ENCODE measurements at regions of chr11 and their contacts with region 1.

Region 1: GRCh38 chr11:106276859-106277436 is 199.5 kb downstream of the AASDHPPT start:
- DNase-seq: no peak
- H3K4me3 ChIP-seq: no peak overlapping the region
- H3K27ac ChIP-seq: 0 out of 2 replicates have a peak overlapping the region, but pooled peaks have one; percentile 10
- H3K4me1 ChIP-seq: peaks cover 0 to 5% (median 0%) of the 10 kb centered on the region in 4 experiments; a peak in 1 of 7 replicates
- H3K27me3 ChIP-seq: peaks cover 0 to 1% (median 0%) of the 10 kb centered on the region in 4 experiments; a peak in 1 of 7 replicates
- CTCF ChIP-seq: peak in 2 of 3 experiments; percentile 59 to 60; a peak in 3 of 4 replicates
- EP300 ChIP-seq: no peak
- POLR2A ChIP-seq: no peak
- RAD21 ChIP-seq: peak; percentile 70 to 78

Region 2: DNA sequence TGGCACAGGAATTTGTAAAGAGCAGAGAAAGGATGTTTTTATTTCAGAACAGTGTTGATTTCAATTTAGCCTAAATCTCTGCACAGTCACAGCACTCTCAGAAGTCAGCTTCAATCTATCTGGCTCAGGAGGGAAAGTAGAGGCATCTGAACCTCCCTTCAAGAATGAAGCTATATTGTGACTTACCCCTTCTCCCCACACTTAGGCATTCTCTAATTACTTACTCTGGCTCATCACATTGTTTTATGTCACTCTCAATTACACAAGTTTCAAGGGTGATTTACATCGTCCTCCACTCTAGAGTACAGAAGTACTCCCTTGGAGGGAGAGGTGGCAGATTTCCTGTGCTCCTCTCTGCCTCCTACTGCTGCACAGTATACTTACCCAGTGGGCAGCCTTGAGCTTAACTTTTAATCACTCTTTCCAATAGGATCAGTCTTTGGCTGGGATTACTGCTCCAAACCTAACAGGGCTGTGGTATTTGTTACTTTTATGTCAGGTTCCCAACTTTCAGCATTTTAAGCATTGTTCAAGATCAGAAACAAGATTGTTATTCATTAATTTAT is 12.0 kb after region 1 on chr11:
- CTCF ChIA-PET with region 1: interaction called, 14 read pairs
- POLR2A ChIA-PET with region 1: no interaction called
- DNase-seq: no peak
- H3K4me3 ChIP-seq: no peak overlapping the region
- H3K27ac ChIP-seq: no peak overlapping the region
- H3K4me1 ChIP-seq: no peaks in the 10 kb centered on the region
- H3K27me3 ChIP-seq: no peaks in the 10 kb centered on the region
- CTCF ChIP-seq: peak in 2 of 3 experiments; percentile 8 to 39; a peak in 1 of 4 replicates
- EP300 ChIP-seq: no peak
- POLR2A ChIP-seq: no peak
- RAD21 ChIP-seq: peak in 1 of 2 experiments; percentile 35; a peak in 2 of 4 replicates

Region 3: DNA sequence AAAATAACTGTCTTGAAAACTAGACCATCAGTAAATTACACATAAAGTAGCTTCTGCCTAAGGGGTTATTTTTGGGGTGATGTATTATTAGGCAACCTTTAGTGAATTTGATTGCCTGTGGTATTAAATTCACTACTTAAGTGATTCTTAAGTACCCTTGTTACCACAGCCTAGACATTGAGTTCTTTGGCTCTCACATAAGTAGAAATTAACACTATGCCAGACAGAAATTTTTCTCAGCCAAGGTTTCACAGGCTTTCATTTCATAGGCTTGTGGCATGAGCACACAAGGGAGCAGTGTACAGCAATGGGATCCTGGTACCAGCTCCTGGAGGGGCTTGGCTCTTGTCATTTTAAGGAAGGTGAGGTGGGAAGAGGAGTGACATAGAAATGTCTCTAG is 19.0 kb after region 1 on chr11:
- CTCF ChIA-PET with region 1: interaction called, 14 read pairs
- POLR2A ChIA-PET with region 1: no interaction called
- DNase-seq: no peak
- H3K4me3 ChIP-seq: no peak overlapping the region
- H3K27ac ChIP-seq: no peak overlapping the region
- H3K4me1 ChIP-seq: no peaks in the 10 kb centered on the region
- H3K27me3 ChIP-seq: no peaks in the 10 kb centered on the region
- CTCF ChIP-seq: no peak
- EP300 ChIP-seq: no peak
- POLR2A ChIP-seq: no peak
- RAD21 ChIP-seq: no peak

Region 4: DNA sequence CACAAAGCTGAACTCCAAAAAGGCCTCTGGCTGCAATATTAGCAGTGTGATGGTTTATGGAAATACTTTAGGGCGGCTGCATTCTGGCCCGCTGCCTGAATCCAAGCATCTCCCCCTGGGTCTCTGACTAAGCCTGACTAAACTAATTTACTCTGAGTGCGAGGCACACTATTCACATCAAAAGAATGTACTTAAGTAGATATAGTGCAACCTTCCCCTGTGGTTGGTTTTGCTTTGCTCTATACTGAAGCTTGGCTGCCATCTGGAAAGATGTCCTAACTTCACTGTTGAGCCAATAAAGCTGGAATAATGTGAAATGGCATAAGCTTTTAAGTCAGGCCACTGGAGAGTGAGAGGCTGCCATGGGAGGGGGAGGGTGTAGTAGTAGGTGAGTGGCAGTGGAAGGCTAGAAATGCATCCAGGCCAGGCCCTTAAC is 122.1 kb after region 1 on chr11:
- CTCF ChIA-PET with region 1: no interaction called
- POLR2A ChIA-PET with region 1: no interaction called
- DNase-seq: no peak
- H3K4me3 ChIP-seq: no peak overlapping the region
- H3K27ac ChIP-seq: no peak overlapping the region
- H3K4me1 ChIP-seq: peaks cover 0 to 5% (median 0%) of the 10 kb centered on the region in 4 experiments; a peak in 1 of 7 replicates
- H3K27me3 ChIP-seq: no peaks in the 10 kb centered on the region
- CTCF ChIP-seq: no peak
- EP300 ChIP-seq: no peak
- POLR2A ChIP-seq: no peak
- RAD21 ChIP-seq: no peak

Region 5: DNA sequence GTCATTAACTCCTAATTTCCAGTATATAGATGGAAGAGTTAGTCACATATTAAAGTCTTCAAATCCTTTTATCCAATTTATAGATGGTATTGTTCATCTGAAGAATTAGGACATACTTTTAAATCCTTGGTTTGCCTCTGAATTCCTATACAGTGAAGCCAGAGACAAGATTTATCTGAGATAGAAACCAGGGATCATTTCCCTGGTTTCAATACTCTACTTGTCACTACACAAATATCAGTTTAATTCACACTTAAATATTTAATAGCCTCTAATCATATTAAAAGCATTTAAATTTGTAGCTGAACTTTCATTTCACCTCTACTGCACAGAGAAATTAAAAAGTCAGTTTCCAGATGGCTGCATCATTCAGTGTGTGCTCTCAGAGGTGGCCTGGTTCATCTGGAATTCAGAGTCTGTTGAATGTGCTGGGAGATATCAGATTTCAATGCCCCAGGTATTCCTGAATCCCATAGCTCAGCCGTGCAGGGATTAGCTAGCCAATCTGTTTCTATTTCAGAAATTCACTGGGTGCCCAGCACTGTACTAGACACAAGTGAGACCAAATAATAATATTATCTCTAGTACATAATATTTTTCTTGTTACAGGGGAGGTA is 144.8 kb after region 1 on chr11:
- CTCF ChIA-PET with region 1: no interaction called
- POLR2A ChIA-PET with region 1: no interaction called
- DNase-seq: no peak
- H3K4me3 ChIP-seq: no peak overlapping the region
- H3K27ac ChIP-seq: no peak overlapping the region
- H3K4me1 ChIP-seq: peaks cover 0 to 3% (median 0%) of the 10 kb centered on the region in 4 experiments; a peak in 1 of 7 replicates
- H3K27me3 ChIP-seq: no peaks in the 10 kb centered on the region
- CTCF ChIP-seq: no peak
- EP300 ChIP-seq: no peak
- POLR2A ChIP-seq: no peak
- RAD21 ChIP-seq: no peak

Region 6: DNA sequence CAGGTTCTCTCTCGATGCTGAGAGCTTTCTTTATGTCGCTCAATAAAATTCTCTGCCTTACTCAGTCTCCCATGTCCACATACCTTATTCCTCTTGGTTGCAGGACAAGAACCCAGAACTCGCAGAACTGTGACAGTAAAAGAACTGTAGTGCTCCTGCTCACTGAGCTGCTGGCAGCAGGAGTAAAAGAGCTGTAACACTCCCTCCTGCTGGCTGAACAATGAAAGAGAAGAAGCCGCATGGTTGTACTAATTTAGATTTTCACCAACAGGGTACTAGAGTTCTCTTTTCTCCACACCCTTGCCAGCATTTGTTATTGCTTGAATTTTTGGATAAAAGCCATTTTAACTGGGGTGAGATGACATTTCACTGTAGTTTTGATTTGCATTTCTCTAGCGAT is 308.1 kb after region 1 on chr11:
- CTCF ChIA-PET with region 1: interaction called, 13 read pairs
- POLR2A ChIA-PET with region 1: no interaction called
- DNase-seq: peak in 1 of 2 experiments; percentile 3
- H3K4me3 ChIP-seq: no peak overlapping the region
- H3K27ac ChIP-seq: no peak overlapping the region
- H3K4me1 ChIP-seq: no peaks in the 10 kb centered on the region
- H3K27me3 ChIP-seq: no peaks in the 10 kb centered on the region
- CTCF ChIP-seq: peak in 2 of 3 experiments; percentile 63 to 80; a peak in 3 of 4 replicates
- EP300 ChIP-seq: no peak
- POLR2A ChIP-seq: no peak
- RAD21 ChIP-seq: peak; percentile 89 to 90